Activated CD4-positive, alpha-beta T cell treated with anti-CD3 and anti-CD28 coated beads, Interleukin-2, amount 10 ng/mL, durations not matched to agents 7 days and 5 days (primary cell): ENCODE measurements at regions of chr14 and their contacts with region 1.

Region 1: GRCh38 chr14:22836301-22837113 is at the start of gene MMP14:
- DNase-seq: no peak
- H3K4me3 Mint-ChIP-seq: peak within 1 kb of the TSS; percentile 47
- H3K27ac Mint-ChIP-seq: no peak within 1 kb of the TSS
- H3K4me1 Mint-ChIP-seq: peaks cover 14% of the 10 kb centered on the region
- H3K27me3 Mint-ChIP-seq: peaks cover 28% of the 10 kb centered on the region
- total RNA-seq, gene MMP14: 1.8 to 2.1 TPM

Region 2: DNA sequence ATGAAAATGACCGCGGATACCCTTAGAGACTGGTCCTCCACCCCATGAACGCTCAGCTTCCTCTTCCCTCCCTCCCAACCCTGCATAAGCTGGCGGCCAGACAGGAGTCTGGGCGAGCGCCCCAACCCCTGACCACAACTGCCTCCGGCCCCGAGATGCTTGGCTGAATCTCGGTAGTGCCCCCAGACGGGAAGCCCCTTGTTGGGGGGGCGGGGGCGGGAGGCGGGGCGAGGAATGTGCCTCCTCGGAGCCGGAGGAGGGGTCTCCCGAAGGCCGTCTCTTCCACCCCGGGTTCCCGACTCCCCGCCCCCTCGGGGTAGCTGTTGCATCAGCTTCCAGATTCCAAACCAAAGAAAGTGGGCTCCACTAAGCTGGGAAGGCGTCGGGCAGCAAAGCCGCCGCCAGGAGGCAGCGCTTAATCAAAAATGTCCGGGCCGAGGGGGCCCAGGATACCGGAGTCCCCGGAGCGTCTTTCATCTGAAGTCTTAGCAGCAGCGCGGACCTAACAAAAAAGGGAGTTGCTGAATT is 13.9 kb before region 1 on chr14:
- CTCF ChIA-PET with region 1: interaction called, 13 read pairs
- POLR2A ChIA-PET with region 1: no interaction called
- DNase-seq: peak; percentile 60
- H3K4me3 Mint-ChIP-seq: peak overlapping the region; percentile 37
- H3K27ac Mint-ChIP-seq: no peak overlapping the region
- H3K4me1 Mint-ChIP-seq: peaks cover 35% of the 10 kb centered on the region
- H3K27me3 Mint-ChIP-seq: peaks cover 17% of the 10 kb centered on the region

Region 3: DNA sequence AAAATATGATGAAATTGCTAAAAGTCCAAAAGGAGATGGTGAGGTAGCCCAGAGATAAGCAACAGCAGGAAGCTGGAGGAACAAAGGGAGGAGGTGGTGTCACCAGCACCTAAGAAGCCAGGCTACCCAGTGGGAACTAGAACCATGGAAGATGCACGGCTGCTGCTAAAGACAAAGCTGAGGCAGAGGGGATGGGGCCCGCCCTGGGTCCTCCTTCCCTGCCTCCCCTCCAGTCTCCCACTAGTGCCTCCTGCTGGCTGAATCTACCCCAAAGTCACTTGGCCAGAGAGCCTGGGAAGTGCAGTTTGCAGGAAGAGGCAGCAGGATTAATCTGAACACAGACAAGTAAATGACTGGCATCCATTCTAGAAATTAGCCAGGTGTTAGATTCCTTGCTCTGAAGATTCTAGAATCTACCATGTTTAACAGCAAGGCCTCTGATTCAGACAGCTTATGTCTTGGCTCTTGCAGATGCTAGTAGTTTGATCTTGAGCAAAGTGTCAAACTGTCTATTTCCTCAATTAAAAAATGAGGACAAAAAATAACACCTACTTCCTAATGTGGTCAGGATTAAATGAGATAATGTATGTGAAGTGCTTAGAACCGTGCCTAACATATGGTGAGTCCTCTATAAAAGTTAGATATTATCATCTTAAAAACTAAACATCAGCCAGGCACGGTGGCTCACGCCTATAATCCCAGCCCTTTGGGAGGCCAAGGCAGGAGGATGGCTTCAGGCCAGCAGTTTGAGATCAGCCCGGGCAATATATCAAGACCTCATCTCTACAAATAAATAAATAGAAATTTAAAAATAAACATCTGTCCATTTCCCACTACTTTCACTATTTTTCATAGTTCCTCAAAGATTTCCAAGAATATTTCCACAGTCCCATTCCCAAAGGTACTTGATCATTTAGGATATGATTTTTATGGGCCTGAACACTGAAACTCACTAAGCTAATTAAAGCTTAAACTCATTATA is 29.2 kb after region 1 on chr14:
- CTCF ChIA-PET with region 1: no interaction called
- POLR2A ChIA-PET with region 1: no interaction called
- DNase-seq: no peak
- H3K4me3 Mint-ChIP-seq: no peak overlapping the region
- H3K27ac Mint-ChIP-seq: no peak overlapping the region
- H3K4me1 Mint-ChIP-seq: peaks cover 9% of the 10 kb centered on the region
- H3K27me3 Mint-ChIP-seq: peaks cover 22% of the 10 kb centered on the region